Cardiac septum (tissue), 1 donor: ENCODE measurements at regions of chr1 and their contacts with region 1.

Region 1: GRCh38 chr1:226634166-226634588 is 85.6 kb downstream of the STUM start:
- DNase-seq: peak; percentile 91

Region 2: DNA sequence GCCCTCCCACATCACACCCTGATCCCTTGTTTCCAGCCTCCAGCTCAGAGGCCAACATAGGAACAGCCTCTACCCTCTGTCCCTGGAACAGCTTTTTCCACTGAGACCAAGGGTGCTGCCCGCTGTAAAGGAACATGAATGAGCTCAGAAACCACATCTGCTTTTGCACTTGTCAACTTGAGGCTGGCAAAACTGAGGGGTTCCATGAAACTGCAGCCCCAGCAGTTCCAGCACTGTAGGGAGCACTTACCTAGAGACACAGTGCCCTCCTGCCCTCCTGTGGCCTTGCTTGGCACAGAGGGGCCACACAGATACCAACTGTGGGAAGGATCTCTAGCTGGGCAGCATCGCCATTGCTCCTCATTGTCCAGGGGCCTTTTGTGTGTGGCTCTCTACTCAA is 53.2 kb after region 1 on chr1:
- intact Hi-C with region 1: loop called (anchors 2 kb)
- DNase-seq: no peak

Region 3: DNA sequence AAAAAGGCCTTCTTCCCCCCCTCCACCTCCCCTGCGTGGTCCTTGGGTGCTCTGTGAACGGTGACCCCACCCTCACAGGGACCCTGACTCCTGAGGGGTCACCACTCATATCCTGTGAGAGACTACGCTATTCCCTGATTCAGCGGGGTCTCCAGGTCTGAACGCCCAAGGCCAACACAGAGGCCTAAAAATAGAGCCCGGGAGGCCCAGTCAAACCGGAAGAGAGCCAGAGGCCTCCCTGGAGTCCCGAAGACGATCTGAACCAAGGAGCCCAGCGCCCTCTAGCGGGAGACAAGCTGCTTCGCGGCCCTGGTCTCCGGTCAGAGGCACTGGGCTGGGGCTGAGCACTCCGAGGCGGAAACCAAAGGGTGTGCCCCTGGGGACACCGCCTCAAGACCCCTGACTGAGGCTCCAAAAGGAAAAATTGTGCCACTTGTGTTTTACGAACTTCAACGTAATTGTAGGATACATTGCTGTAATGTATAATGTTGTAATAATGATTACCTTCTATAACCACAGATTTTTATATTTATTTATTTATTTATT is 193.9 kb after region 1 on chr1:
- intact Hi-C with region 1: loop called (anchors 1 kb)
- DNase-seq: peak; percentile 97